T-cell (primary cell): ENCODE measurements at regions of chr3 and their contacts with region 1.

Region 1: DNA sequence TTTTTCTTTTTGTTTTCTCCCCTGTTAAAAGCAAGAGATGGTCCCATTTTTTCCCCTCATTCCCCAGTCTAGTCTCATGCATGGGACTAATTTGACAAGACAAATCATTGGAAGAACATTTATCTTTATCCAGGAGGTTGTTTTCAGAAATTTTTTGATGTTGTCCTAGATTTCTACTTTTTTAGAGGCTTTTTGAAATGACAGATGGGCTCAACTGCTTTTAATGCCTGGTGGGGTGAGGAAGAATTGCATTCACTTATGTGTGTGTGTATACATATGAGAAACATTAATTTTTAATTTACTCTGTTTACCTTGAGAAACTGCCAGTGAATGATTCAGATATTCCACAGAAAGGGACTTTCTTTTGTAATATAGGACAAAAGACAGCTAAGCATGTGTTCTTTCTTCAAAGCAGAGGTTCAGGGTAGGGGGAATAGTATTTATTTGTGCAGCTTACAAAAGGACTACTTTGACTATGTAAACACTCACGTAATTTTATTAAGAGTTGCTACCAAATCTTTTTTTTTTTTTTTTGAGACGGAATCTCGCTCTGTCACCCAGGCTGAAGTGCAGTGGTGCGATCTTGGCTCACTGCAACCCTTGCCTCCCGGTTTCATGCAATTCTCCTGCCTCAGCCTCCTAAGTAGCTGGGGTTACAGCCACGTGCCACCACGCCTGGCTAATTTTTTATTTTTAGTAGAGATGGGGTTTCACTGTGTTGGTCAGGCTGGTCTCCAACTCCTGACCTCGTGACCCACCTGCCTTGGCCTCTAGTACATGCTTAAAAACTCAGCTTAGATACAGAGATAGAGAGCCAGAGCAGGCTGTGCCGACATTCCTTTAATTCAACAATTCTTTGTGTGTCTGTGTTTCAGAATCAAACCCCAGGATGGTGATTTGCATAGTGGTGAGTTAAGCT is 130.1 kb upstream of the RARB start:
- DNase-seq: no peak
- ATAC-seq: no peak
- H3K4me3 ChIP-seq: no peak overlapping the region
- H3K4me3 Mint-ChIP-seq: no peak overlapping the region
- H3K27ac ChIP-seq: no peak overlapping the region
- H3K27ac Mint-ChIP-seq: no peak overlapping the region
- H3K4me1 ChIP-seq: no peaks in the 10 kb centered on the region
- H3K4me1 Mint-ChIP-seq: no peaks in the 10 kb centered on the region
- H3K27me3 ChIP-seq: no peaks in the 10 kb centered on the region
- H3K27me3 Mint-ChIP-seq: no peaks in the 10 kb centered on the region

Region 2: DNA sequence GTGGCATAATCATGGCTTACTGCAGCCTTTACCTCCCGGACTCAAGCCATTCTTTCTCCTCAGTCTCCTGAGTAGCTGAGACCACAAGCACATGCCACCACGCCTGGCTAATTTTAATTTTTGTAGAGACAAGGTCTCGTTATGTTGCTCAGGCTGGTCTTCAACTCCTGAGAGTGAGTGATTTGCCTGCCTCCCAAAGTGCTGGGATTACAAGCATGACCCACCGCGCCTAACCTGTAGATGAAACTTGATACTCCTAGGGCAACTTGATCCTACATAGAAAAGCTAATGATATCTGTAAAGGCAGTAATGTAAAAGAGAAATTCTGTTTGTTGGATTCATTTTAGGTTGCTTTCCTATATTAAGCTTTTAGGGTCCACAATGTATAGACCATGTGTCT is 411.4 kb before region 1 on chr3:
- CTCF ChIA-PET with region 1: interaction called in 1 of 2 experiments, 10 read pairs
- POLR2A ChIA-PET with region 1: no interaction called
- DNase-seq: no peak
- ATAC-seq: no peak
- H3K4me3 ChIP-seq: no peak overlapping the region
- H3K4me3 Mint-ChIP-seq: no peak overlapping the region
- H3K27ac ChIP-seq: no peak overlapping the region
- H3K27ac Mint-ChIP-seq: no peak overlapping the region
- H3K4me1 ChIP-seq: no peaks in the 10 kb centered on the region
- H3K4me1 Mint-ChIP-seq: no peaks in the 10 kb centered on the region
- H3K27me3 ChIP-seq: no peaks in the 10 kb centered on the region
- H3K27me3 Mint-ChIP-seq: no peaks in the 10 kb centered on the region